Activated T-helper 1 cell treated with anti-CD3 and anti-CD28 coated beads, Interleukin-12 subunit alpha, Interleukin-12 subunit beta, Interleukin-2, Interleukin-4 antibody, amounts not matched to agents 30 ng/mL and 10 ng/mL and 1 ng/mL, durations not matched to agents 14 hours and 24 hours and 36 hours (primary cell): ENCODE measurements at regions of chr7 and their contacts with region 1.

Region 1: GRCh38 chr7:16619979-16620408 is 25.6 kb downstream of the ANKMY2 start:
- DNase-seq: no peak
- H3K4me3 Mint-ChIP-seq: peak overlapping the region; percentile 44
- H3K27ac Mint-ChIP-seq: peak overlapping the region; percentile 72
- H3K4me1 Mint-ChIP-seq: peaks cover 18% of the 10 kb centered on the region
- H3K27me3 Mint-ChIP-seq: no peaks in the 10 kb centered on the region

Region 2: DNA sequence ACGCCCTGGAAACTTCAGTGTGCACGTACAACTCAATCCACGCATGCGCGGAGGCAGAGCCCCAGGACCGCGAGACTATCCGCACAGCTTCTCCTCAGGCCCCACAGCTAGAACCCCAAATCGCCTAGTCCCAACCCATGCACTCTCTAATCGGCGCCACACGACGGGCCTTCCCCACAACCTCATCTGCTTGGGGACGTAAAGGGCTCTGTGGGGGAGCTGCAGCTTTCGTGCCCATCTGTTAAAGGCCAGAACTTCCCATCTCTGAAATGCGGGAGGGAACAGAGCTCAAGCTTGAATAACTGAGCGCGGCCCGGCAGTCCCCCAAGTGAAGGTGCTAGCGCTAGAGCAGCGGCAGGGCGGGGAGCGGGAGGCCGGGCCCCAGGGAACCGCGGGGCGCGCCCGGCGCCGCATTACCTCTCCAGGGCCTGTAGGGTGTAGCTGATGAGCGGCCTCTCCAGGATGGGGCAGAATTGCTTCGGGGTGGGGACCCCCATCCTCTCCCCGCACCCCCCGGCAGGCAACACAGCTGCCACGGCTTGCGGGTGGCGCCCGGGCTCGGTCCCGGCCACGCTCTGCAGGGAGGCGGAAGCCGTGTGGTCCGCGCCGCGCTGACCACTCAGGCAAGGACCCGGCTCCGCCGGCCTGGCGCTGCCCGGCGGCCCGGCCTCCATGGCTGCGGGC is 199.2 kb before region 1 on chr7:
- intact Hi-C with region 1: loop called (anchors 1 kb)
- DNase-seq: peak; percentile 80
- H3K4me3 Mint-ChIP-seq: peak overlapping the region; percentile 87
- H3K27ac Mint-ChIP-seq: peak overlapping the region; percentile 82
- H3K4me1 Mint-ChIP-seq: peaks cover 22% of the 10 kb centered on the region
- H3K27me3 Mint-ChIP-seq: no peaks in the 10 kb centered on the region

Region 3: GRCh38 chr7:16712916-16713315 is 92.9 kb after region 1 on chr7:
- intact Hi-C with region 1: loop called (anchors 5 kb)
- DNase-seq: no peak
- H3K4me3 Mint-ChIP-seq: no peak overlapping the region
- H3K27ac Mint-ChIP-seq: no peak overlapping the region
- H3K4me1 Mint-ChIP-seq: peaks cover 22% of the 10 kb centered on the region
- H3K27me3 Mint-ChIP-seq: no peaks in the 10 kb centered on the region

Region 4: GRCh38 chr7:17130281-17131059 is 510.5 kb after region 1 on chr7:
- intact Hi-C with region 1: loop called (anchors 10 kb)
- DNase-seq: no peak
- H3K4me3 Mint-ChIP-seq: no peak overlapping the region
- H3K27ac Mint-ChIP-seq: no peak overlapping the region
- H3K4me1 Mint-ChIP-seq: peaks cover 44% of the 10 kb centered on the region
- H3K27me3 Mint-ChIP-seq: no peaks in the 10 kb centered on the region